ENCODE measurements at regions of chr7 and their contacts with region 1.

Region 1: GRCh38 chr7:101743241-101743994 is 74.0 kb upstream of the CUX1 start:
- DNase-seq: peak; percentile 81
- ATAC-seq: peak; percentile 84
- H3K4me3 Mint-ChIP-seq: peak overlapping the region; percentile 76
- H3K27ac Mint-ChIP-seq: peak overlapping the region; percentile 81
- H3K4me1 Mint-ChIP-seq: peaks cover 37% of the 10 kb centered on the region
- H3K27me3 Mint-ChIP-seq: no peaks in the 10 kb centered on the region
- CTCF ChIP-seq: no peak

Region 2: DNA sequence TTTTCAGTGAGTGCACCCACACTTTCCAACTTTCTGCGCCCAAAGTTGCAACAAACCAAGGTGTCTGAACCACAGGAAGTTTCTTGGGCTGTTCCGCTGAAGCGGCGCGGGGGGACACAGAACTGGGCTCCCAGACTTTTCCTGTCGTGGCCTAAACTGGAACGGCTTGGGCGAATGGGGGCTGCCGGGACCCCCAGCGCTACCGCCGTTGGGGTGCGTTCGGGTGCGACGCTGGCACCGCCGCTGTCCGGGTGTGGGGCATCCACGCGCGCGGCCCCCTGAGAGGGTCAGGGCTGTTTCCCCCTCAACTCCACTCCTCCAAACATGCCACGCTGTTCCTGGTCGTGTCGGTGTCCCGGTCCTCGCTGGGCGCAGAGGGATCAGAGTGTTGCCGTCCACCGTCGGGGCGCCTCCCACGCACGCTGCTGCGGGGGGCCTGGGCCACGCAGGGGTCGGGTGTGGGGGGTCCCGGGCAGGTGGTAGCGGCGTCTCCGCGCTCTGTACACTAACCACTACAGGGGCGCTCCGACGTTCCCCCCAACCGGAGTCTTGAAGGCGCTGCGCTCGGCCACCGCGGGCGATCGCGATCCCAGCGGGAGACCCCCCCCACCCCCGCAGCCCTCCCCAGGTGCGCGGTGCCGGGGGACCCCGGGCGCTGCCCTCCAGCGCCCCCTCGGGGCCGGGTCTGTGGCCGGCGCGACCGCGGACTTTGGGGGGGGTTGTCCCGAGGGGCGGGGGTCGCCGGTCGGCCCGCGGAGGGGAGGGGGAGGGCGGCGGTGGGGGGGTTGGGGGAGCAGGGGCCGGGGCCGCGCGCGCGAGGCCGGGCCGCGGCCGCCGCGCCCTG is 71.8 kb after region 1 on chr7:
- CTCF ChIA-PET with region 1: interaction called, 14 read pairs
- POLR2A ChIA-PET with region 1: interaction called, 3 read pairs
- DNase-seq: peak; percentile 64
- ATAC-seq: peak; percentile 29
- H3K4me3 Mint-ChIP-seq: peak overlapping the region; percentile 70
- H3K27ac Mint-ChIP-seq: no peak overlapping the region
- H3K4me1 Mint-ChIP-seq: peaks cover 38% of the 10 kb centered on the region
- H3K27me3 Mint-ChIP-seq: peaks cover 9% of the 10 kb centered on the region
- CTCF ChIP-seq: peak; percentile 44

Region 3: DNA sequence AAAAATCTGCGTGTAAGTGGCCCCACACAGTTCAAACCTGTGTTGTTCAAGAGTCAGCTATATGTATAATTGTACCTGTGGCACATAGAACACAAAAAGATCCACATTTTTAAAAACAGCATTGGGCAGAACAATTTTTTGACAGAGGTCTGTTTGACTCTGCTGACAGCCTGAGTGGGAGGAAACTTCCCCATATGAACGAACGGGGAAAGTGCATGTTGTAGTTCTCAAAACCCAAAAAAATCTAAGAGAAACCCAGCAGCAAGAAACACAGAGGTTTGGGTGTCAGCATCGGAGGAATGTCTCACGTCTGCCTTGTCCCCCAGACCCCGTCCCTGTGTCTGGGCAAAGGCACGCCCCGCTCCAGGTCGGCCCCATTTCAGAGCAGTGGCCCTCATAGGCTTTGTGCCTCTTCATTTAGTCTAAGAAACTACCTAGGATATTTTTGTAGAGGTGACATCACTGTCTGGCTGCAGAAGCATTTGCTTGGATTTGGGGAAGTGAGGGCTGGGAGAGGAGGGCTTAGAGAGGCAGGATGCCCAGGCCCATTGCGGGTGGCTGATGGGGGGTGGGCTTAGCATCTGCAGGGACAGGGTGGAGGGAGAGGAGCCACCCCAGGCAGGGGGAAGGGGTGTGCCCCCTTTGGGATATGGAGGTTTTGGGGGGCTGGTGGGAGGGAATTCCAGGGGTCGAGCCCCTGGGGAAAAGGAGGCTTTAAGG is 85.0 kb after region 1 on chr7:
- CTCF ChIA-PET with region 1: no interaction called
- POLR2A ChIA-PET with region 1: no interaction called
- DNase-seq: no peak
- ATAC-seq: no peak
- H3K4me3 Mint-ChIP-seq: no peak overlapping the region
- H3K27ac Mint-ChIP-seq: no peak overlapping the region
- H3K4me1 Mint-ChIP-seq: peaks cover 66% of the 10 kb centered on the region
- H3K27me3 Mint-ChIP-seq: no peaks in the 10 kb centered on the region
- CTCF ChIP-seq: no peak

Measured in WTC11 (cell line).